GM12878 (cell line): ENCODE measurements at regions of chr2 and their contacts with region 1.

Region 1: DNA sequence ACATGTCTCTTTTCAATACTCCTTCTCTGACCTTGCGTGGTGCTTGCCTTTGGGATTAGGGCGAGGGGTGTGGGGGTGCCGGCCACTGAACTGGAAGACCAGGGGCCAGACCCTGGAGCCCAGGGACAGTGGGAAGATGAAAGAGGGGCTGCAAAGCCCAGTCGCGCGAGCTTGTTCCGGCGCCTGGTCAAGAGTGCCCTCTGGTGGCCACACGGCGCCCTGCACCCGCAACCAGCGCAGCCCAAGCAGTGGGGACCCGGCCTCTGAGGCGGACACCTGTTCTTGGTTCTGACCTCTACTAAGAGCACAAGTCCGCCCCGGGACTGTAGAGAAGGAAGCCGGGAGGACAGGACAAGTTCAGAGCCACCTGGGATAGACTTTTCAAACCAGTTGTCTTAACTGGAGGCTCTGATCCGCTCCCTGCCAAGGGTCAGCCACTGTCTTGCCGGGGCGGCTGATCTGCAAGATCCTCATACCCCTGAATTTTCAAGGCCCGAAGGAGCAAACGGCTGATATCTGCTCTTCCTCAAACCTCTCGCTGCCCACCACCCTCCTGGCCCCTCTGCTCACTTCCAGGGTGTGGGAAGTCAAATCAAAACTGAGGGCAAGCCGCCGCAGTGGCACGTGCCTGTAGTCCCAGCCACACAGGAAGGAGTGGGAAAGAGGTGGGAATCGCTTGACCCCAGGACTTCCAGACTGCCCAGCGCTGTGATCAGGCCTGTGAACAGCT is 14.9 kb upstream of the MSH6 start:
- DNase-seq: no peak
- ATAC-seq: peak; percentile 96
- H3K4me3 ChIP-seq: no peak overlapping the region
- H3K27ac ChIP-seq: no peak overlapping the region
- H3K4me1 ChIP-seq: no peaks in the 10 kb centered on the region
- H3K27me3 ChIP-seq: no peaks in the 10 kb centered on the region
- CTCF ChIP-seq: peak; percentile 97 to 100 (median 97); a peak in 5 of 6 replicates
- EP300 ChIP-seq: no peak
- POLR2A ChIP-seq: no peak
- RAD21 ChIP-seq: peak; percentile 99

Region 2: DNA sequence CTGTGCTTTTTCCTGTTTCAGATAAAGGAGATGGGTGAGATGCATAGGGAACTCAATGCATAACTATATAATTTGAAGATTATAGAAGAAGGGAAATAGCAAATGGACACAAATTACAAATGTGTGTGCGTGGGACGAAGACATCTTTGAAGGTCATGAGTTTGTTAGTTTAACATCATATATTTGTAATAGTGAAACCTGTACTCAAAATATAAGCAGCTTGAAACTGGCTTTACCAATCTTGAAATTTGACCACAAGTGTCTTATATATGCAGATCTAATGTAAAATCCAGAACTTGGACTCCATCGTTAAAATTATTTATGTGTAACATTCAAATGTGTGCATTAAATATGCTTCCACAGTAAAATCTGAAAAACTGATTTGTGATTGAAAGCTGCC is 381.5 kb before region 1 on chr2:
- CTCF ChIA-PET with region 1: interaction called, 23 read pairs
- POLR2A ChIA-PET with region 1: no interaction called
- RAD21 ChIA-PET with region 1: interaction called, 10 read pairs
- SMC1A ChIA-PET with region 1: interaction called, 15 read pairs
- in situ Hi-C with region 1: no loop called
- intact Hi-C with region 1: no loop called
- DNase-seq: no peak
- ATAC-seq: peak; percentile 61
- H3K4me3 ChIP-seq: no peak overlapping the region
- H3K27ac ChIP-seq: no peak overlapping the region
- H3K4me1 ChIP-seq: peaks cover 3% of the 10 kb centered on the region; the same call in 1 of the 2 replicates
- H3K27me3 ChIP-seq: peaks cover 0 to 3% of the 10 kb centered on the region in 2 experiments; a peak in 1 of 4 replicates
- CTCF ChIP-seq: no peak
- EP300 ChIP-seq: no peak
- POLR2A ChIP-seq: no peak
- RAD21 ChIP-seq: no peak

Region 3: GRCh38 chr2:47452761-47453160 is 315.3 kb before region 1 on chr2:
- CTCF ChIA-PET with region 1: interaction called, 3 read pairs
- POLR2A ChIA-PET with region 1: no interaction called
- RAD21 ChIA-PET with region 1: interaction called, 3 read pairs
- SMC1A ChIA-PET with region 1: interaction called, 4 read pairs
- in situ Hi-C with region 1: loop called (anchors 5 kb)
- intact Hi-C with region 1: no loop called
- DNase-seq: no peak
- ATAC-seq: no peak
- H3K4me3 ChIP-seq: no peak overlapping the region
- H3K27ac ChIP-seq: no peak overlapping the region
- H3K4me1 ChIP-seq: no peaks in the 10 kb centered on the region; the same call in 1 of the 2 replicates
- H3K27me3 ChIP-seq: no peaks in the 10 kb centered on the region
- CTCF ChIP-seq: no peak
- EP300 ChIP-seq: no peak
- POLR2A ChIP-seq: no peak
- RAD21 ChIP-seq: no peak

Region 4: DNA sequence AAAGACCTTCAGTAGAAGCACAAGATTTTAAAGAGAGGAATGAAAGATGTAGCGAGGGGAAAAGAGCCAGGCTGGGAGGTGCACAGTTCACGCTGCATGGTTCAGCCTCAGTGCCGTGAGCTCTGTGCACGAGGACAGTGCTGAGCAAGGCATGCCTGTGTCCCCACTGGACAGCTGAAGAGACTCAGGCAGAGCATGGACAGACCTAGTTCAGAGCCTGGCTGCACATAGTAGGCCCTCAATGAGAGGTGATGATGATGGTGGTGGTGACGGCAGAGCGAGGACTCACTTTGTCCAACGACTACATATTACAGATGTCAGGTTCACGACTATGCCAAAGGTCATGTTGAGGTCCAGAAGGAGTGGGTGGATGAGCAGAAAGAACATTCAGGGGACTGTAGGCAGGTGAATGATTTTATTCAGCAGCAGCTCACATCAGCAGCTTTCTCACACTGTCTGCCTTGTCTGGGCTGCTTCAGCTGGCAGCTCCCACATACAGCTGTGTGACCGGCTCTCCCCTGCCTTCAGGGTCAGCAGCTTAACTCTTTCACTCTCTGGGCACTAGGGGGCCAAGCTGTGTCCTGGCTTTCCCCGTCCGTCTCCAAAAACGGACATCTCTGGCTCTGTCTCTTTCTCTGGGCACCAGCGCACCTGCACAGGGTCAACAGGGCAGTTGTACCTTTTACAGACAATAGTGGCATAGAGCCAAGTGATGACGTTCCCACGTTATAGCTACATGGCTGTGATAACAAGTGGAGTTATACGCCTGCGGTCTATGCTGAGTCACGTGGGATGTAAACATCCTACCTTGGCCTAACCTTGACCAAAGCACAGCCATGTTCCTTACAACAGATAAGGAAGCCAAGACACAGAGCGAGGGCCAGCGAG is 113.9 kb before region 1 on chr2:
- CTCF ChIA-PET with region 1: interaction called, 11 read pairs
- POLR2A ChIA-PET with region 1: no interaction called
- RAD21 ChIA-PET with region 1: interaction called, 14 read pairs
- SMC1A ChIA-PET with region 1: interaction called, 39 read pairs
- in situ Hi-C with region 1: no loop called
- intact Hi-C with region 1: loop called (anchors 5 kb)
- DNase-seq: no peak
- ATAC-seq: peak; percentile 50
- H3K4me3 ChIP-seq: no peak overlapping the region
- H3K27ac ChIP-seq: no peak overlapping the region
- H3K4me1 ChIP-seq: peaks cover 39% of the 10 kb centered on the region
- H3K27me3 ChIP-seq: no peaks in the 10 kb centered on the region; a peak in 1 of 4 replicates
- CTCF ChIP-seq: peak in 2 of 3 experiments; percentile 31 to 35; a peak in 3 of 6 replicates
- EP300 ChIP-seq: no peak
- POLR2A ChIP-seq: no peak
- RAD21 ChIP-seq: peak; percentile 47; the same call in 1 of the 2 replicates

Region 5: DNA sequence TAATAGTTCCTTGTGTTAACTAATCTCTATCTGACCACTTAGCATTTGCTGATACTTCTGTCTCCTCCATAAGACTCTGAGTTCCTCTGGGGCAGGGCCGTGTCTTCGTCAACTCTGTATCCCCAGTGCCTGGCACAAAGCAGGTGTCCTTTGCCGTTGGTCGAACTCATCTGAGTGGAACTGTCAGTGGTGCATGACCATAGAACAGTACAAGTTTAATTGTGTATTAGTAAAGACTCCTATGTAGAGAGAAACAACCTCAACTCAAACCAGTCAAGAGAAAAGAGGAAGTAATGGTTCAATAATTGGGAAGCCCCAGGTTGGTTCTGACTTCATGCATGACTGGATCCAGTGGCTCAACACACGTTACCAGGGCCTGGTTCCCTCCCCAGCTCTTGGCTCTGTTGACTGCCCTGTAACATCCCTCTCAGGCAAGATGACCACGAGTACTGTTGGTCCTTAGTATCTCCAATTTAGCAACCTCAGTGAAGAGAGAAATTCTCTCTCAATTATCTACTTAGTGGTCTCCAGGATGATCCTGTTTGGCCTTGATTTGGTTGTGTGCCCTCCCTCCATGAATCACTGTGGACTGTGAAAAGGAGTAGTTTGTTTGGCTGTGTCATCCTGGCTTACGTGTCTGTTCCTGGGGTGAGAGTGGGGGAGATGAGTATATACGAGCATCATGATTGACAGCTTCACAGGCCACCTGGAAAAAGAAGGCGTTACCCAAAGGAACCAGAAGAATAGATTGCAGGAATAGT is 43.6 kb before region 1 on chr2:
- CTCF ChIA-PET with region 1: interaction called, 31 read pairs
- POLR2A ChIA-PET with region 1: no interaction called
- RAD21 ChIA-PET with region 1: interaction called, 15 read pairs
- SMC1A ChIA-PET with region 1: interaction called, 15 read pairs
- in situ Hi-C with region 1: no loop called
- intact Hi-C with region 1: loop called (anchors 1 kb)
- DNase-seq: peak; percentile 100
- ATAC-seq: peak; percentile 92
- H3K4me3 ChIP-seq: no peak overlapping the region
- H3K27ac ChIP-seq: peak overlapping the region; percentile 77
- H3K4me1 ChIP-seq: peaks cover 49% of the 10 kb centered on the region
- H3K27me3 ChIP-seq: no peaks in the 10 kb centered on the region
- CTCF ChIP-seq: no peak
- EP300 ChIP-seq: peak; percentile 97
- POLR2A ChIP-seq: 0 out of 2 replicates have a peak, but pooled peaks have one; percentile 20
- RAD21 ChIP-seq: no peak

Region 6: GRCh38 chr2:47782671-47783485 is 14.8 kb after region 1 on chr2 and contains the start of gene MSH6:
- CTCF ChIA-PET with region 1: interaction called, 18 read pairs
- POLR2A ChIA-PET with region 1: interaction called, 3 read pairs
- RAD21 ChIA-PET with region 1: interaction called, 4 read pairs
- SMC1A ChIA-PET with region 1: interaction called, 7 read pairs
- in situ Hi-C with region 1: no loop called
- intact Hi-C with region 1: no loop called
- DNase-seq: peak; percentile 39
- ATAC-seq: peak; percentile 89
- H3K4me3 ChIP-seq: peak within 1 kb of the TSS; percentile 73
- H3K27ac ChIP-seq: peak within 1 kb of the TSS; percentile 80
- H3K4me1 ChIP-seq: 0 out of 2 replicates have a peak, but pooled peaks cover 8% of the 10 kb centered on the region
- H3K27me3 ChIP-seq: no peaks in the 10 kb centered on the region
- CTCF ChIP-seq: no peak
- EP300 ChIP-seq: no peak
- POLR2A ChIP-seq: peak; percentile 92
- RAD21 ChIP-seq: no peak
- polyA plus RNA-seq, gene MSH6: 12.4 to 25.6 TPM